CD8-positive, alpha-beta T cell (primary cell): ENCODE measurements at regions of chr5 and their contacts with region 1.

Region 1: GRCh38 chr5:179051784-179052183 is 8.4 kb upstream of the ZNF354C start:
- DNase-seq: no peak
- ATAC-seq: no peak
- H3K4me3 ChIP-seq: no peak overlapping the region
- H3K4me3 Mint-ChIP-seq: no peak overlapping the region
- H3K27ac ChIP-seq: no peak overlapping the region
- H3K27ac Mint-ChIP-seq: no peak overlapping the region
- H3K4me1 ChIP-seq: no peaks in the 10 kb centered on the region
- H3K4me1 Mint-ChIP-seq: no peaks in the 10 kb centered on the region
- H3K27me3 ChIP-seq: peaks cover 0 to 2% of the 10 kb centered on the region in 2 experiments
- H3K27me3 Mint-ChIP-seq: peaks cover 21% of the 10 kb centered on the region
- CTCF ChIP-seq: no peak

Region 2: GRCh38 chr5:180494060-180494509 is 1442.3 kb after region 1 on chr5 and contains the start of gene CNOT6:
- CTCF ChIA-PET with region 1: no interaction called
- POLR2A ChIA-PET with region 1: no interaction called
- intact Hi-C with region 1: loop called in 1 of 2 experiments (anchors 10 kb)
- DNase-seq: peak; percentile 90 to 98 (median 95)
- ATAC-seq: peak; percentile 91
- H3K4me3 ChIP-seq: peak within 1 kb of the TSS; percentile 64
- H3K4me3 Mint-ChIP-seq: peak within 1 kb of the TSS; percentile 98
- H3K27ac ChIP-seq: peak within 1 kb of the TSS; percentile 80 to 88
- H3K27ac Mint-ChIP-seq: peak within 1 kb of the TSS; percentile 99
- H3K4me1 ChIP-seq: peaks cover 16% of the 10 kb centered on the region
- H3K4me1 Mint-ChIP-seq: peaks cover 40% of the 10 kb centered on the region
- H3K27me3 ChIP-seq: no peaks in the 10 kb centered on the region
- H3K27me3 Mint-ChIP-seq: no peaks in the 10 kb centered on the region
- CTCF ChIP-seq: no peak
- total RNA-seq, gene CNOT6: 13.1 to 13.9 TPM